Activated T-helper 1 cell treated with anti-CD3 and anti-CD28 coated beads, Interleukin-12 subunit alpha, Interleukin-12 subunit beta, Interleukin-2, Interleukin-4 antibody, amounts not matched to agents 30 ng/mL and 10 ng/mL and 1 ng/mL, durations not matched to agents 14 hours and 24 hours and 36 hours (primary cell): ENCODE measurements at regions of chr13 and their contacts with region 1.

Region 1: DNA sequence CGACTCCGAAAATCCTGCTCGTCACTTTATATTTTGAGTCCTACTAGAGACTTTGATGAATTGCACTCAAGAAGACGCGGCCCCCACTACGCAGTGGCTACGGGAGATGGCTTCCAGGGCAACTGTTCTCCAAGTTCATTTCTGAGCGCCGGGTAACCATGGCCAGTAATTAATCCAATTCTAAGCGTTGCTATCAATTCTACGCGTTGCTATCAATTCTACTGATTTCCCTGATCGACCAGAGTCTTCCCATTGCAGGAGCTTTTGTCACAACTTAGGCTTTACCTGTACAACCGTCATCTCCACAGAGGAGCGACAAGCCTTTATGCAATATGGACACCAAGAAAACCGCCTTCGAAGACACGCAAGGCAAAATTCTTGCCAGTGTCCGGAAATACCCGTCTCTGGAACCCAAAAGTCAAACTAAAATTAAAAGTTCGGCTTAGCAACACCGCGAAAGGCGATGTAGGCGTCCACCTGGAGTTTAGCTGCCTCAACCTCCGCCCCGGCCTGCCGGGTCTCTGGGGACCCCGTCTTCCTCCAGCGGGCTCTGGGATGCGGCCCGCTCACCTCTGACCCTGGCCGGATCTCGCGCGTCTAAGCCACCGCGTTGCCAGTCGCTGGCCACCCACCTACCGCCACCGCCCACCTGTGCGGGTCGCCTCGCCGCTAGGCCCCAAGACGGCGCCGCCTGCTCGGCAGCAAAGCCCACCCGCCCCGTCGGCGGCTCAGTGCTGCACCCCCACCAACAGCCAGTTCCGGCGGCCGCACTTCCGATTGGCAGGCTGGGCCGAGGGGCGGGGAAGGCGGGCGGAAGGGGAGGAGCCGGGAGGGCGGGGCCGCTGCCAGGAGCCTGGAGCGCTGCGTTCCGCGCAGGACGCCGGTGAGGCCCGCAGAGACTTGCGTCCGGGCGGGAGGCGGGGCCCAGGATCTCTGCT is at the start of gene SUPT20H:
- DNase-seq: peak; percentile 86
- H3K4me3 Mint-ChIP-seq: peak within 1 kb of the TSS; percentile 96
- H3K27ac Mint-ChIP-seq: peak within 1 kb of the TSS; percentile 96
- H3K4me1 Mint-ChIP-seq: peaks cover 11% of the 10 kb centered on the region
- H3K27me3 Mint-ChIP-seq: peaks cover 3% of the 10 kb centered on the region
- total RNA-seq, gene SUPT20H: 73.2 and 75.7 TPM in 2 replicates

Region 2: DNA sequence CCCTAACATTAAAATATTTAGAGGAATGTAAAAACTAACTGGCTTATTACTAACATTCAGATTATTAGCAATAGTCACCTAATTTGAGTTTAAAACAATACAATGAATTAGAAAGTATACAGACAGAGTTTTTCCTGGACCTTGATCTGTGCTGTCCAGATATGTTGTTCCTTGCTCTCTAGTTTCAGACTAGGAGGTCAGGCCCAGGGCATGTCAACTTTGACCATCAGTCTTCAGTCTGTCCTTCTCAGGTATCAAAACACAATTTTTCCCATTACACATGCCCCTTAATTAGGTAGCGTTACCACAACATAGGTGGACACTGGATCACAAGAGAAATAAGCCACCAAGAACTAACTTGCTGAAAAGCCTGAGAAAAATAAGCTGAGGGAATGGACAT is 1779.7 kb before region 1 on chr13:
- intact Hi-C with region 1: no loop called
- DNase-seq: no peak
- H3K4me3 Mint-ChIP-seq: no peak overlapping the region
- H3K27ac Mint-ChIP-seq: no peak overlapping the region
- H3K4me1 Mint-ChIP-seq: no peaks in the 10 kb centered on the region
- H3K27me3 Mint-ChIP-seq: no peaks in the 10 kb centered on the region

Region 3: DNA sequence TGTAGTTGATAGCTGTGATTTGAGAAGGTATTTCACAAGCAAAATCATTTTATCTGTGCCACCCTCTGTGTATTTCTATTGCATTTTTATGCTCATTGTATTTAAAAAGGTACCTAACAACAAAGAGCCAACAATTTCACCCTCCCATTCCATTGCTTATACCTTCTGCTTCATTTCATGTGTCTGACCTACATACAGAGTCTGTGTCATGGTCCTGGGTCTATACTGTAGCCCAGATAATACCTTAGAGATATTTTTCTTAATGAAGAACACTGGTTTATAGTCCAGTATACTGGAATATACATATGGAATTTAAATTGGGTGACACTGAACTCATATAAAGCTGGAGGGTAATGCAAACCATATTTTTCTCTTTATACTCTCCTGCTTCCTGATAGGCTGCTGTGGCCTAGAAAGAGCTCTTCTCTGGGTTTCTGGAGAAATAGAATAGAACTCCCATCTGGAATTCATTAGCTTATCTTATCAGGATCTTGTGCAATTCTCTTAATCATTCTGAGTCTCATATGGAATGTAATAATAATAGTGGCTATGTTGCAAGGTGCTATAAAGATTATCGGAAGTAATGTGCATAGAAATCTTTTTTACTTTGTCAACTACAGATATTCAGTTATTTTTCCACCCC is 681.2 kb before region 1 on chr13:
- intact Hi-C with region 1: no loop called
- DNase-seq: no peak
- H3K4me3 Mint-ChIP-seq: no peak overlapping the region
- H3K27ac Mint-ChIP-seq: no peak overlapping the region
- H3K4me1 Mint-ChIP-seq: no peaks in the 10 kb centered on the region
- H3K27me3 Mint-ChIP-seq: peaks cover under 1% of the 10 kb centered on the region

Region 4: DNA sequence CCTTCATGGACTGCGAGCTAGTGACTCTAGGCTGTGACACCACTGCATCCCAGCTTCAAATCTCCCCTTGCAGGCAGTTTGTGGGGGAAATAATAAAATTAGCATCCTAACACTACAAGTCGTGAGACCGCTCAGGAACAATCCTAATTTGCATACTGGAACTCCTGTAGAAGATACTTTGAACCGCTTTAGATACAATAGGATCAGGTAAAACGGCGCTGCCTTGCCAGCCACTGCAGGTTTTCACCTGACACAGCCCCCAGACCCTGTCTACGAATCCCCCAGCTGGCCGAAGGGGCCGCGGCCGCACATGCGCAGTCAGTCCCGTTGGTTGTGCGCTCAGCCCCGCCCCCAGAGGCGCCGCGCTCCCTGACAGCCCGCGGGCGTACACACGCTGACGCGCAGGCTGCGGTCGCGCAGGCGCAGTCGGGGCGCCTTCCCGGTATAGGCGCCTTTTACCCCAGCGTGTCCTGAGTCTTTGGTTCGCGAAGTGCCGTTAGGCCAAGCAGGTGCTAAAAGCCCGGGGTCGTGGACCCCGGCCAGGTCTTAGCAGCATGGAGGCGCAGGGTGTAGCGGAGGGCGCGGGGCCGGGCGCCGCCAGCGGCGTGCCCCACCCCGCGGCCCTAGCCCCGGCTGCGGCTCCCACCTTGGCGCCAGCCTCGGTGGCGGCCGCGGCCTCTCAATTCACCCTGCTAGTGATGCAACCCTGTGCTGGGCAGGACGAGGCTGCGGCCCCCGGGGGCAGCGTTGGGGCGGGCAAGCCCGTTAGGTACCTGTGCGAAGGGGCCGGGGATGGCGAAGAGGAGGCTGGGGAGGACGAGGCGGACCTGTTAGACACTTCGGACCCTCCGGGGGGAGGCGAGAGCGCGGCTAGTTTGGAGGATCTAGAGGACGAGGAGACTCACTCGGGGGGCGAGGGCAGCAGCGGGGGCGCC is 240.1 kb before region 1 on chr13 and contains the start of gene RFXAP:
- intact Hi-C with region 1: loop called (anchors 1 kb)
- DNase-seq: peak; percentile 89
- H3K4me3 Mint-ChIP-seq: peak within 1 kb of the TSS; percentile 96
- H3K27ac Mint-ChIP-seq: peak within 1 kb of the TSS; percentile 92
- H3K4me1 Mint-ChIP-seq: peaks cover 60% of the 10 kb centered on the region
- H3K27me3 Mint-ChIP-seq: peaks cover 8% of the 10 kb centered on the region
- total RNA-seq, gene RFXAP: 19.0 and 19.8 TPM in 2 replicates

Region 5: GRCh38 chr13:36858290-36858689 is 200.9 kb before region 1 on chr13:
- intact Hi-C with region 1: loop called (anchors 5 kb)
- DNase-seq: no peak
- H3K4me3 Mint-ChIP-seq: no peak overlapping the region
- H3K27ac Mint-ChIP-seq: no peak overlapping the region
- H3K4me1 Mint-ChIP-seq: peaks cover 18% of the 10 kb centered on the region
- H3K27me3 Mint-ChIP-seq: peaks cover 2% of the 10 kb centered on the region

Region 6: GRCh38 chr13:36999054-36999714 is 60.0 kb before region 1 on chr13 and contains the start of gene ALG5:
- intact Hi-C with region 1: loop called (anchors 1 kb)
- DNase-seq: peak; percentile 95
- H3K4me3 Mint-ChIP-seq: peak within 1 kb of the TSS; percentile 100
- H3K27ac Mint-ChIP-seq: peak within 1 kb of the TSS; percentile 100
- H3K4me1 Mint-ChIP-seq: peaks cover 37% of the 10 kb centered on the region
- H3K27me3 Mint-ChIP-seq: no peaks in the 10 kb centered on the region
- total RNA-seq, gene ALG5: 52.5 and 53.2 TPM in 2 replicates

Region 7: GRCh38 chr13:37011002-37011401 is 48.2 kb before region 1 on chr13:
- intact Hi-C with region 1: loop called (anchors 2 kb)
- DNase-seq: no peak
- H3K4me3 Mint-ChIP-seq: no peak overlapping the region
- H3K27ac Mint-ChIP-seq: no peak overlapping the region
- H3K4me1 Mint-ChIP-seq: peaks cover 14% of the 10 kb centered on the region
- H3K27me3 Mint-ChIP-seq: no peaks in the 10 kb centered on the region

Region 8: GRCh38 chr13:38349390-38350113 is 1290.4 kb after region 1 on chr13 and contains the start of gene UFM1:
- intact Hi-C with region 1: loop called (anchors 1 kb)
- DNase-seq: peak; percentile 81
- H3K4me3 Mint-ChIP-seq: peak within 1 kb of the TSS; percentile 98
- H3K27ac Mint-ChIP-seq: peak within 1 kb of the TSS; percentile 100
- H3K4me1 Mint-ChIP-seq: peaks cover 36% of the 10 kb centered on the region
- H3K27me3 Mint-ChIP-seq: peaks cover 3% of the 10 kb centered on the region
- total RNA-seq, gene UFM1: 66.9 and 71.3 TPM in 2 replicates